Endothelial cell of umbilical vein (primary cell): ENCODE measurements at regions of chr14 and their contacts with region 1.

Region 1: GRCh38 chr14:91402771-91403600 is 14.6 kb downstream of the CCDC88C start:
- DNase-seq: peak; percentile 94
- H3K4me3 ChIP-seq: peak overlapping the region in 1 of 3 experiments; percentile 13
- H3K27ac ChIP-seq: peak overlapping the region; percentile 36
- H3K4me1 ChIP-seq: peaks cover 32% of the 10 kb centered on the region
- H3K27me3 ChIP-seq: no peaks in the 10 kb centered on the region
- CTCF ChIP-seq: no peak
- POLR2A ChIP-seq: no peak

Region 2: GRCh38 chr14:91373591-91374254 is 29.3 kb before region 1 on chr14:
- CTCF ChIA-PET with region 1: interaction called, 9 read pairs
- POLR2A ChIA-PET with region 1: no interaction called
- dilution Hi-C with region 1: no loop called
- intact Hi-C with region 1: loop called (anchors 2 kb)
- DNase-seq: peak; percentile 63
- H3K4me3 ChIP-seq: peak overlapping the region in 1 of 3 experiments; percentile 25
- H3K27ac ChIP-seq: peak overlapping the region; percentile 29
- H3K4me1 ChIP-seq: peaks cover 56% of the 10 kb centered on the region
- H3K27me3 ChIP-seq: no peaks in the 10 kb centered on the region
- CTCF ChIP-seq: no peak
- POLR2A ChIP-seq: no peak